ENCODE measurements at regions of chr10 and their contacts with region 1.

Region 1: GRCh38 chr10:97686962-97687784 is at the start of gene AVPI1:
- DNase-seq: peak; percentile 95
- H3K4me3 Mint-ChIP-seq: peak within 1 kb of the TSS; percentile 75
- H3K27ac Mint-ChIP-seq: peak within 1 kb of the TSS; percentile 54
- H3K4me1 Mint-ChIP-seq: peaks cover 17% of the 10 kb centered on the region
- H3K27me3 Mint-ChIP-seq: peaks cover 3% of the 10 kb centered on the region
- total RNA-seq, gene AVPI1: 1.8 to 1.9 TPM

Region 2: DNA sequence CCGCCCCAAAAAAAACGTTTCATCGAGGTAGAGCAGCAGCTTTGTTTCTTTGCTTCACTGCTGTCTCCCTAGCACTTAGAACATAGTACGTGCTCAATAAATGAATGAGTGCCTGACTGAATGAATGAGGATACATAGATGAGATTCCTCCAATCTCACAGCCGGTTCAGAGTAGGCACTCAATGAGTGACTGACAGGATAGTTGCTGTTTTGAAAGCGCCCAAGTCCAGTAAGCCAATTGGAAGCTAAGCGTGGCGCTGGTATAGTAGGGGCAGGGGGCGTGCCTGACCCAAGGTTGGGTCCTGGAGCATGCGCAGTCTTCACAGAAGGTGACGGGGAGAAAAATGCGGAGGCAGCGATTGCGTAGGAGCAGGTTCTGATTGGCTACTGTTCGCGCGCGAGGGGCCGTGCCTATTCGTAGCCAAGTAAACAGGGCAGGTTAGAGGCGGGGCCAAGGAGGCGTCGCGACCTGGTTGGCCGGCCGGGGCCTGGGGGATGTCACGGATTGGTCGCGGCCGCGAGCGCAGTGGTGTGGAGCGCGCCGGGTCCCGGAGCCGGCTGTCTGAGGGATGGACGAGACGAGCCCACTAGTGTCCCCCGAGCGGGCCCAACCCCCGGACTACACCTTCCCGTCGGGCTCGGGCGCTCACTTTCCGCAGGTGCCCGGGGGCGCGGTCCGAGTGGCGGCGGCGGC is 46.9 kb before region 1 on chr10 and contains the start of gene PI4K2A:
- CTCF ChIA-PET with region 1: interaction called, 11 read pairs
- POLR2A ChIA-PET with region 1: interaction called, 13 read pairs
- DNase-seq: peak; percentile 99
- H3K4me3 Mint-ChIP-seq: peak within 1 kb of the TSS; percentile 95
- H3K27ac Mint-ChIP-seq: peak within 1 kb of the TSS; percentile 81
- H3K4me1 Mint-ChIP-seq: peaks cover 23% of the 10 kb centered on the region
- H3K27me3 Mint-ChIP-seq: no peaks in the 10 kb centered on the region
- total RNA-seq, gene PI4K2A: 13.3 TPM

Region 3: GRCh38 chr10:97676770-97677581 is 10.2 kb before region 1 on chr10:
- CTCF ChIA-PET with region 1: interaction called, 25 read pairs
- POLR2A ChIA-PET with region 1: interaction called, 6 read pairs
- DNase-seq: peak; percentile 52
- H3K4me3 Mint-ChIP-seq: no peak overlapping the region
- H3K27ac Mint-ChIP-seq: no peak overlapping the region
- H3K4me1 Mint-ChIP-seq: peaks cover 17% of the 10 kb centered on the region
- H3K27me3 Mint-ChIP-seq: no peaks in the 10 kb centered on the region

Region 4: DNA sequence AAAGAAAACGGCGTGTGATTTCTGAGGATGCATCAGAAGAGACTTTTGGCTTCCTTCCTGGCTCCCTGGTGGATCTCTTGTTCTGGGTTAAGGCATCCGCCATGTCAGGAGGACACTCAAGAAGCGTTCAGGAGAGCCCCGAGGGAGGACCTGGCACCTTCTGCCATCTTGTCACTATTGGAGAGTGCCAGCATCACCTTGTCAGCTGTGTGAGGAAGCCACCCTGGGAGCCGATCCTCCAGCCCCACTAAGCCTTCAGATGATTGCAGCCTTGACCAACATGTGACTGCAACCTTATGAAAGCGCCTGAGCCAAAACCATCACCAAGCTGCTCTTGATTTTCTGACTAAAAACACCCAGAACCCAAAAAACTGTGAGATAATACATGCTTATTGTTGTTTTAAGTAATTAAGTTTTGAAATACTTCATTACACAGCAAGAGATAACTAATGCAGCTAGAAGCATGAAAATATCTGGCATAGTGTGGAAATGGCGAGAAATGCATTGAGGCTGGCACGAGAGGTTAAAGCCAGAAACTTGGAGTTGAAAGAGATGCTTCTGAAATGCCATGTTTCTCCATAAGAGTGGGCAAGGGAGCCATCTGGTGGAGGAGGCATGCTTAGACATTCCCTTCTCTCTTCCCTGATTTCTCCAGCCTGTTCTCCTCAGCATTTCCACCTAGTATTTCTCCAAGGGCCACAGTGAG is 44.3 kb after region 1 on chr10:
- CTCF ChIA-PET with region 1: interaction called, 36 read pairs
- POLR2A ChIA-PET with region 1: interaction called, 15 read pairs
- DNase-seq: peak; percentile 53
- H3K4me3 Mint-ChIP-seq: no peak overlapping the region
- H3K27ac Mint-ChIP-seq: no peak overlapping the region
- H3K4me1 Mint-ChIP-seq: peaks cover 16% of the 10 kb centered on the region
- H3K27me3 Mint-ChIP-seq: no peaks in the 10 kb centered on the region

Region 5: DNA sequence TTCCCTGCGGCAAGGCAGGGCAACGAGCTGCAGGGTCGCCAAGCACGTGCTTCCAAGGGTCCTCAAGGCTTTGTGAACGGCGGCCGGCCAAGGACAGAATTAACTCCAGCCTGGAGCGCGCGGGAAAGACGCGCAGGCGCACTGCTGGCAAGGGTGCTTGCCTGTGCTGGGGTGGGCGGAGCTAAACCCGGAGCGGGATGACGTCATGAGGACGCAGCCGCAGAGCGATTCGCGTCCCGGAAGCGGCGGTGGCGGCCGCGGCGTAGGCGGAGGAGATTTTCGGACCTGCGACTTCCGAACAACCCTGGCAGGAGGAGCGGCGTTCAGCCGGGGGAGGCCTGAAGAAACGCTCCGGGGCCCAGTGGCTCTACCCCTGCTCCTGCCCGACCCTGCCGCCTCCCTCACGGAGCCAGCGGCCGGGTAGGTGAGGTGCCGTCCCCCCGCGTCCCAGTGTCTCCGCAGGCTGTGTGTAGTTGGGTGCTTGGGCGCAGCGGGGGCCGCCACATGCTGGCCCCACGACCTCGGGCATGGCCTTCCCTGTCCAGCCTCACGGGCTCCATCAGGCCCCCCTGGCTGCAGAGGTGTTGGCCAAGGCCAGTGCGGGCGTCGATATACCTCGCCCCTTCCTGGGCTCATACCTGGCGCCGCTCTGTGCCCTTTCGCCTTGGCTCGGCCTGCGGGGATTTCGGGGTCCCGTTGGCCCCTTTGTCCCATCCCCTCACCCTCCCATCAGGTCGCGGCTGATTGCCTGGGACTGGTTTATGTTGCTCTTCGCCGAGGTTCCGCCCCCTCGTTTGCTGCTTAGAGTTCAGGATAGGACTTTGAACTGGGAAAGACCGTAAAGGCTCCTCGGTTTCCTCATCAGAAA is 50.0 kb after region 1 on chr10 and contains the start of gene ZFYVE27:
- CTCF ChIA-PET with region 1: interaction called, 36 read pairs
- POLR2A ChIA-PET with region 1: interaction called, 15 read pairs
- DNase-seq: peak; percentile 95
- H3K4me3 Mint-ChIP-seq: peak within 1 kb of the TSS; percentile 85
- H3K27ac Mint-ChIP-seq: peak within 1 kb of the TSS; percentile 86
- H3K4me1 Mint-ChIP-seq: peaks cover 42% of the 10 kb centered on the region
- H3K27me3 Mint-ChIP-seq: no peaks in the 10 kb centered on the region
- total RNA-seq, gene ZFYVE27: 29.3 to 32.4 TPM

Measured in activated CD4-positive, alpha-beta memory T cell treated with anti-CD3 and anti-CD28 coated beads, Interleukin-2, amount 10 ng/mL, durations not matched to agents 7 days and 5 days (primary cell).